Astrocyte of the spinal cord (primary cell): ENCODE measurements at regions of chr10 and their contacts with region 1.

Region 1: DNA sequence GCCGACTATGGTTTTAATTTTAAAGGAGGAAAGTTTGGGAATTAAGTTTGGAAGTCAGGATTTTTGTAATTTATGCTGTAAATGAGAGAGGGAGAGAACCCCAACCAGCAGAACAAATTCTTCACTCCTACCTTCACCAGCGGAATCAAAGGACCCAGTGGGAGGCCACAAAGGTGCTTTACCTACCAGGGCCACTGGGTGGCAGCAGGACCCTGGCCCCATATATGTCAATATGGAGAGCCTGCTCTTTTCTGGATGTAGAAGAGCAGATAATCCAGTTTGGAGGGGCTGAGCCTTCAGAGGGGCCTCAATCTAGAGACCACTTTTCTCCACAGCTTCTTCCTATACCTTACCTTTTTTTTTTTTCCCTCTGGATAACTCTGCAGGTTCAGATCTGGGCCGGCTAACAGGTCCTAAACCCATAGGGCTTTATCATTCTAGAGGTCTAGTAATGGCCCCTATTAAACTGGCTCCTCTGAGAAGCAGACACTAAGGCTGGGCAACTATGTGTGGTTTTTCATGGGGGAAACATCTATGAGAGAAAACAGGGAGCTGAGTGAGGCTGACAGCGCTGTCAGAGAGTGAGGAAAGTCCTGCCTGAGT is 8.5 kb upstream of the SCD start:
- DNase-seq: peak; percentile 60
- H3K4me3 ChIP-seq: no peak overlapping the region
- CTCF ChIP-seq: peak; percentile 95

Region 2: GRCh38 chr10:99926925-99927720 is 411.4 kb before region 1 on chr10:
- in situ Hi-C with region 1: no loop called
- DNase-seq: peak; percentile 67
- H3K4me3 ChIP-seq: no peak overlapping the region
- CTCF ChIP-seq: no peak

Region 3: GRCh38 chr10:100291356-100291755 is 47.2 kb before region 1 on chr10:
- in situ Hi-C with region 1: no loop called
- DNase-seq: no peak
- H3K4me3 ChIP-seq: no peak overlapping the region
- CTCF ChIP-seq: no peak

Region 4: DNA sequence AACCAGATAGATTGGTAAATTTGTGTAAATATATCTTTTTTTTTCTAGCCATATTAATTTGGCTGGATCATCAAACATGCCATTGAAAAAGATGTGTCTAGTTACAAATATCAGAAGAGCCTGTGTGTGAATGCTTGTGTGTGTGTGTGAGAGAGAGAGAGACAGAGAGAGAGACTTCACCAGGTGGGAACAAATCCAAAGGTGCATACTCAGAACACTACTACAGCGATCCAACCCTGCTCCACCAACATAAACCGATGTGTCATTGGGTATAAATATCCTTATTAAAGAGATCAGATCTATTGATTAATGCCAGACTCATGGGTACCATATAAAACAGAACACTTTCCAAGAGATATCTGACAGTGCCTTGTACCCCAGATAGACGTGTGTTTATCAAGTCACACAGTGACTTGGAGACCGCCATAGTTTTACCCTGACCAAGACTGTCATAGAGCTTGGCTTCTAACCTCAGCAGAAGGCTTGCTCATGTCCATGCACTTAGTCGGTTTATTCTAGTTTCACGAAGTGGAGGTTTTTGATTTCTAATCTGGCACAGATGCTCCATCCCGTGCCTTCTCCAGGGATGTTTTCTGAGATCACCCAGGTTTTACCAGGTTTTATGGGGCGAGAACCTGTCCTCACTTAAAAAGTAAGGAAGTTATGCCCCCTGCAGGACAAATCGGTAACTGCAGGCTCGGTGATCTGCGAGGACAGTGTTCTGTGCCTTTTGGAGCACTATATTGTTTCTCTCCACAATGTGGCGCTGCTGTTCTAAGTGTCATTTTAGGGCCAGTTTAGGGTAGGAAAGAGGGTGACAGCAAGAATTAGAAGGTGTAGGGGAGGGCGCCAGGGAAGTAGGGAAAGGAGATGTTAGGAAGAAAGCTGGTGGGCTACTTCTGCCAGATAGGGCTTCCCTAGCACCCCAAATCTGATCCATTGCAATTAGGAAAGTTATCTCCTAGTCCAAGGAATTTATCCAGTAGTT is 95.0 kb after region 1 on chr10:
- in situ Hi-C with region 1: loop called (anchors 10 kb)
- DNase-seq: peak; percentile 94
- H3K4me3 ChIP-seq: no peak overlapping the region
- CTCF ChIP-seq: peak; percentile 98